Keratinocyte (primary cell): ENCODE measurements at regions of chr7 and their contacts with region 1.

Region 1: DNA sequence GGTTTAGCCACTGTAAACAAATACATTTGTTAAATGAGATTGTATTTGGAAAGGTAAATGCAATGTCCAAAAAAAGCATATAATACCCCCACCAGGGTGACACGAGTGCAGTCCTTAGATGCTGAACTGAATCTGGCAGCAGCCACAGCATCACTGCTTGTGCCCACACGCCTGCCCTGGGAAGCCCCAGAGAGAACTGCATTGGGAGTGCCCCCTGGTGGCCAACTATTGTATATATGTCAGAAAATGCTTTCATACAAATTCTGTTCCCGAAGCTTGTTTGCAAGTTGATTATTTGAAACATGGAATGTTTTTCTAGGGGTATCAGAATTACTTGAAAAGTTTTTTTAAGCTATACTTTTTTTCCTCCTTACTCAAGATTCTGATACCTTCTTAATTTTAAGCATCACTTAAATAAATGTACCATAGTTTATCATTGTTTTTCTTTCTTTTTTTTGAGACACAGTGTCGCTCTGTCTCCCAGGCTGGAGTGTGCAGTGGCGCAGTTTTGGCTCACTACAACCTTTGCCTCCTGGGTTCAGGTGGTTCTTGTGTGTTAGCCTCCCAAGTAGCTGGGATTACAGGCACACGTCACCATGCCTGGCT is 50.1 kb downstream of the LANCL2 start:
- DNase-seq: peak; percentile 30
- H3K4me3 ChIP-seq: no peak overlapping the region
- H3K27ac ChIP-seq: no peak overlapping the region
- H3K4me1 ChIP-seq: no peaks in the 10 kb centered on the region
- H3K27me3 ChIP-seq: no peaks in the 10 kb centered on the region
- CTCF ChIP-seq: peak; percentile 70 to 77 (median 75)

Region 2: DNA sequence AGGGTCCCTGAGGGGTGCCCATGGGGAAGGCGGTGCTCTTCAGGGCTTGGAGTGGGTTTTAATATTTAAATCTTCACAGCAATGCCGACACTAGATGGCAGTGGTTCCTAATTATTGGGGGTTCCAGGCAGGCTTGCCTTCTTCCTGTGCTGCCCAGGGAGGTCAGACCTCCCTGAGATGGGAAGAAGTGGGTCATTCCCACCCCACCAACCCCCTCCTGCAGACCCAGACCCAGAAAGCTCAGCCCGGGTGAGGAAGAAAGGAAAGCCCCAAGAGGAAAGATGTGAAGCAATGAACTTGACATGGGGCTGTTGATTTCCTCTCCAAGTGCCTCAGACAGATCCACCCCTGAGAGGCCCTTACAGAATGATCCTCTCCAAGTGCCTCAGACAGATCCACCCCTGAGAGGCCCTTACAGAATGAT is 135.2 kb before region 1 on chr7:
- dilution Hi-C with region 1: loop called (anchors 25 kb)
- DNase-seq: no peak
- H3K4me3 ChIP-seq: no peak overlapping the region
- H3K27ac ChIP-seq: no peak overlapping the region
- H3K4me1 ChIP-seq: no peaks in the 10 kb centered on the region
- H3K27me3 ChIP-seq: peaks cover 10% of the 10 kb centered on the region
- CTCF ChIP-seq: peak; percentile 61 to 84 (median 62)

Region 3: DNA sequence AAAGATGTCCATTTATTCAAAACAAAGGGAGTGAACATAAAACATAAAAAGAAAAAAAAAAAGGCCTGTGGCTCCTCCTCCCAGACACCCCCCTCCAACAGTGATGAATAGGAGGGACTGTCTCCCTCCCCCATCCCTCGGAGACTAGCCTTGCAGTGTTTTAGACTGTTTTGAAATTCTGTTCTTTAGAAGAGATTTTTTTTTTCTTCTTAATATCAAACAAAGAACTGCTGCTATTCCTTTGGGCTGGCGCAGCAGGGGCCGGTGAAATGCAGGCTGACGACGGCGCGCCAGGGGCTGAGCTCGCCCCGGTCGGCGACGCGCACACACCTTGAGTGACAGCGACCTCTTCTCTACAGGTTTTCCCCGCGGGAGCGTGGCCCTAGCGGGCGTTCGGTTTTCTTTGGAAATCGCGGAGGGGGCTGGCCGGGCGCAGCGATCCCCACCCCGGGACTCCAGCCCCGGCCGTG is 50.0 kb before region 1 on chr7 and contains the start of gene LANCL2:
- dilution Hi-C with region 1: no loop called
- DNase-seq: no peak
- H3K4me3 ChIP-seq: peak within 1 kb of the TSS; percentile 73 to 90 (median 80)
- H3K27ac ChIP-seq: peak within 1 kb of the TSS; percentile 96
- H3K4me1 ChIP-seq: peaks cover 9% of the 10 kb centered on the region
- H3K27me3 ChIP-seq: no peaks in the 10 kb centered on the region
- CTCF ChIP-seq: no peak
- polyA plus RNA-seq, gene LANCL2: 12.4 to 15.5 TPM (median 14.5 TPM) in 3 replicates

Region 4: GRCh38 chr7:55818686-55819085 is 403.4 kb after region 1 on chr7:
- dilution Hi-C with region 1: no loop called
- DNase-seq: no peak
- H3K4me3 ChIP-seq: no peak overlapping the region
- H3K27ac ChIP-seq: no peak overlapping the region
- H3K4me1 ChIP-seq: no peaks in the 10 kb centered on the region
- H3K27me3 ChIP-seq: no peaks in the 10 kb centered on the region
- CTCF ChIP-seq: no peak